ENCODE measurements at regions of chrX and their contacts with region 1.

Region 1: GRCh38 chrX:77910108-77910840 is at the start of gene ATP7A:
- DNase-seq: peak; percentile 96
- ATAC-seq: peak; percentile 96
- H3K4me3 Mint-ChIP-seq: peak within 1 kb of the TSS; percentile 90
- H3K27ac Mint-ChIP-seq: peak within 1 kb of the TSS; percentile 97
- H3K4me1 Mint-ChIP-seq: peaks cover 15% of the 10 kb centered on the region
- H3K27me3 Mint-ChIP-seq: no peaks in the 10 kb centered on the region
- total RNA-seq, gene ATP7A: 10.0 to 11.9 TPM

Region 2: DNA sequence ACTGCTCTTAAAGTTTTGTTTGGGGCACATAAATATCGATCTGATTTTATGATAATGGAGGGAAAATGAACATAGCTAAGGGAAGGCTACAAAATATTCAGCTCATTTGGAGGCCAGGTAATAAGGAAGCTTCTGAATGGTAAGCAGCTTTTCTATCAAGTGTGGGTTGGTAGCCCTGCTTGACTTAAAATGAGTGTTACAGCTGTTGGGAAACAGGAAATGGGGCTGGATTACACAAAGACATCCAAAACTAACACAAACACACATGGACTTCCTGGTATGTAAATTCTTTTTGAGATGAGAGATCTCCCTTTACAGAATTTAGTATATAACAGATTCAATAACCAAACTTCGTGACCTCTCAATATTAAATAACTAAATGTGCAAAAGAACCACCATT is 405.0 kb before region 1 on chrX:
- CTCF ChIA-PET with region 1: no interaction called
- DNase-seq: no peak
- ATAC-seq: no peak
- H3K4me3 Mint-ChIP-seq: no peak overlapping the region
- H3K27ac Mint-ChIP-seq: no peak overlapping the region
- H3K4me1 Mint-ChIP-seq: no peaks in the 10 kb centered on the region
- H3K27me3 Mint-ChIP-seq: no peaks in the 10 kb centered on the region

Region 3: DNA sequence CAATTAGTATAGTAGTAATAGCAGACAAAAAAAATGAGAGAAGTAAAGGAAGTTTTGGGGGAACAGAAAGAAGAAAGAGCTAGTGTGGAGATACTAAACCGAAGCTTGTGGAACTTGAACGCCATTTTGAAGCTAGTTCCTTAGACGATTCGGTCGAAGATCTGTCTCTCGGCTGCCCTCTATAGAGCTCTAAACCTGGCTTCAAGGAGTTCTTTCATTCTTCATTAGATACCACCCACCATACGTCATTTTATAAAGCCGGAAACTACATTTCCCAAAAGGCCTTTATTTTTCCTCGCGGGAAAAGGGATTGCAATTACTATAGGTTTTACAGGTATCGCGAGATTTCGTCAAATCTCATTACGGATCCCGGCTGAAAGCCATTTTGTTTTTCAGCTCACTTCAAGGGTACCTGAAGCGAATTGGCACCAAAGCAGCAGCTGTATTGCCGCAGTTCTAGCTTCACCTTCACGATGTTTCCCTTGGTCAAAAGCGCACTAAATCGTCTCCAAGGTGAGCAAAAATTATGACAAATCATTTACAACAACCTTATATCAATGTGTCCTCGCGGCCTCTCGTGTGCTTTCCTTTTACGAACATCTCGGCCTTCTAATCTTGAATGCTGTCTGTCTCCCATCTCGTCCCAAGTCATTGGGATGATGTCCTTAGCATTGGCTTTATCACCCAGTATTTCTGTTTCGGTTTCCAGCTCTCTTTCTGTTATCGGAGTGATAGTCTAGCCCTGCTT is 11.0 kb before region 1 on chrX and contains the start of gene COX7B:
- CTCF ChIA-PET with region 1: interaction called, 13 read pairs
- DNase-seq: peak; percentile 81
- ATAC-seq: peak; percentile 64
- H3K4me3 Mint-ChIP-seq: peak within 1 kb of the TSS; percentile 98
- H3K27ac Mint-ChIP-seq: peak within 1 kb of the TSS; percentile 97
- H3K4me1 Mint-ChIP-seq: peaks cover 24% of the 10 kb centered on the region
- H3K27me3 Mint-ChIP-seq: no peaks in the 10 kb centered on the region
- total RNA-seq, gene COX7B: 256 to 279 TPM

Region 4: DNA sequence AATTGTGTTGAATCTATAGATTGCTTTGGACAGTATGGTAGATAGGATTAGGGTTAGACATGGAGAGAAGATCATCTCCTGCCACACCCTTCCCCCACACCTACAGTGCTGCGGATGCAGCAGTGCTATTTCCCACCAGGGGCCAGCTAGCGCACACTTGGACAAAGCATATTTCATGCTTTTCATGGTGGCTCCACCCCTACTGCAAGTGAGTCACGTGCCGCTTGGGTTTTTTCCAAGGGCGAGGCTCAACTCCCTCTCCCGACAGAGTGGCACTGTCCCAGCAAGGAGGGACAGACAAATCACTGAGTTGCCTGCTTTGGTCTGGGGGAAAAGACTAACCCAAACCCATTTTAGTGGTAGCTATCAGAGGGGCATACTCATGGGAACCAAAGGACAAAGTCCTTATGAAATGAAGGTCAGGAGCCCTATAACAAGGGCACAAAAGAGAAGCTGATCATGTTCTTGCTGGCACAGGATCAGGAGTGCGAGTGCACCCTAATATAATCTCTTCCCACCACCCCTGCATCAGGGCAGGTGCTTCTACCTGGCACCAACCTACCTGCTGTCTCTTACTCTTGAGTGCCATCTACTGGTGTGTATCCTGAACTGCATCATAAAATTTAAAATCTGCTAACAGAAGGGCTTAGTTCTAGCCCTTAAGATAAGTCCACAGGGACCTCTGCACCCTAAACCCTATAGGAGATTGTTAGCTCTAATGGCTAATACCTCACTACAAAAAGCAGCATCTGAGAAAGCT is 114.3 kb after region 1 on chrX:
- CTCF ChIA-PET with region 1: interaction called, 14 read pairs
- DNase-seq: no peak
- ATAC-seq: peak; percentile 45
- H3K4me3 Mint-ChIP-seq: no peak overlapping the region
- H3K27ac Mint-ChIP-seq: no peak overlapping the region
- H3K4me1 Mint-ChIP-seq: peaks cover 3% of the 10 kb centered on the region
- H3K27me3 Mint-ChIP-seq: no peaks in the 10 kb centered on the region

Region 5: GRCh38 chrX:78092296-78092695 is 182.0 kb after region 1 on chrX:
- CTCF ChIA-PET with region 1: interaction called, 11 read pairs
- DNase-seq: peak; percentile 50
- ATAC-seq: peak; percentile 80
- H3K4me3 Mint-ChIP-seq: no peak overlapping the region
- H3K27ac Mint-ChIP-seq: peak overlapping the region; percentile 24
- H3K4me1 Mint-ChIP-seq: peaks cover 12% of the 10 kb centered on the region
- H3K27me3 Mint-ChIP-seq: peaks cover 5% of the 10 kb centered on the region